Activated B cell treated with CpG ODN at 0.5 μM for 24 hours (primary cell): ENCODE measurements at regions of chr1 and their contacts with region 1.

Region 1: GRCh38 chr1:2049718-2050427 is at the start of gene PRKCZ:
- DNase-seq: peak; percentile 95
- ATAC-seq: peak; percentile 96
- H3K4me3 Mint-ChIP-seq: peak within 1 kb of the TSS; percentile 81
- H3K27ac Mint-ChIP-seq: peak within 1 kb of the TSS; percentile 68
- H3K4me1 Mint-ChIP-seq: peaks cover 31% of the 10 kb centered on the region
- H3K27me3 Mint-ChIP-seq: peaks cover 8% of the 10 kb centered on the region
- CTCF ChIP-seq: no peak
- total RNA-seq, gene PRKCZ: 20.5 and 28.5 TPM in 2 replicates

Region 2: DNA sequence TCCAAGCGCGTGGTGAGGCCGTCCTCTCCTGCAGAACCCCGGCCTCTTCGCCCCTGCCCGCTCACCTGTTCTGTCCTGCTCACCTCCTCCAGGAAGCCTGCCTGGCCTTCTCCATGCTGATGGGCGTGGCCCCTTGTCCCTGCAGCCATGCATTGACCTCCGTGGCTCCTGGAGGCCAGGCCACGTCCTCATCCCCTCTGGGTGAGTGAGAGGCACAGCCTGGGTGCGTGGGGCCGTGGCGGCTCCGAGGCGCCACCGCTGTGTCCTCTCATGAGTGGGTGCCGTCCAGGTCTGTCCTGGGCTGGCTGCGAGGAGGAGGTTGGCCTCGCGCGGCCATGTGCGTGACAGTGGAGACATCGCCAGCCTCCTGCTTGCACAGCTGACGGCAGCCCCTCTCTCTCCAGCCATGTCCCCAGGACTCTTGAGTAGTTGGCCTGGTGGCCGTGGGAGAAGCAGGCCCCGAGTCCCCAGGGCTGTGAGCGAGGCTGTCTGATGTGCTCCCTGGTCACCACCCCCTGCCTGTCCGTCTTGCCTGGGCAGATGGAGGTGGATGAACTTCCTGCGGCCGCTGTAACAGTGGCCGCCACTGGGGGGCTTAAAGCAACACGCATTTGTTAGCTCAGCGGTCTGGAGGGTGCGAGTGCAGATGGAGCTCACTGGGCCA is 58.5 kb after region 1 on chr1:
- CTCF ChIA-PET with region 1: no interaction called
- POLR2A ChIA-PET with region 1: no interaction called
- intact Hi-C with region 1: loop called (anchors 1 kb)
- DNase-seq: no peak
- ATAC-seq: no peak
- H3K4me3 Mint-ChIP-seq: no peak overlapping the region
- H3K27ac Mint-ChIP-seq: no peak overlapping the region
- H3K4me1 Mint-ChIP-seq: peaks cover 22% of the 10 kb centered on the region
- H3K27me3 Mint-ChIP-seq: no peaks in the 10 kb centered on the region
- CTCF ChIP-seq: no peak

Region 3: GRCh38 chr1:2391041-2391930 is 341.4 kb after region 1 on chr1 and contains the starts of genes MORN1 and RER1:
- CTCF ChIA-PET with region 1: no interaction called
- POLR2A ChIA-PET with region 1: no interaction called
- intact Hi-C with region 1: loop called (anchors 1 kb)
- DNase-seq: peak; percentile 96
- ATAC-seq: peak; percentile 94
- H3K4me3 Mint-ChIP-seq: peak within 1 kb of the TSS; percentile 88
- H3K27ac Mint-ChIP-seq: peak within 1 kb of the TSS; percentile 68
- H3K4me1 Mint-ChIP-seq: peaks cover 52% of the 10 kb centered on the region
- H3K27me3 Mint-ChIP-seq: no peaks in the 10 kb centered on the region
- CTCF ChIP-seq: no peak
- total RNA-seq, gene MORN1: 15.6 and 17.8 TPM in 2 replicates
- total RNA-seq, gene RER1: 102 and 105 TPM in 2 replicates